Activated naive CD4-positive, alpha-beta T cell treated with anti-CD3 and anti-CD28 coated beads, Interleukin-2, amount 10 ng/mL, durations not matched to agents 7 days and 5 days (primary cell): ENCODE measurements at regions of chr10 and their contacts with region 1.

Region 1: DNA sequence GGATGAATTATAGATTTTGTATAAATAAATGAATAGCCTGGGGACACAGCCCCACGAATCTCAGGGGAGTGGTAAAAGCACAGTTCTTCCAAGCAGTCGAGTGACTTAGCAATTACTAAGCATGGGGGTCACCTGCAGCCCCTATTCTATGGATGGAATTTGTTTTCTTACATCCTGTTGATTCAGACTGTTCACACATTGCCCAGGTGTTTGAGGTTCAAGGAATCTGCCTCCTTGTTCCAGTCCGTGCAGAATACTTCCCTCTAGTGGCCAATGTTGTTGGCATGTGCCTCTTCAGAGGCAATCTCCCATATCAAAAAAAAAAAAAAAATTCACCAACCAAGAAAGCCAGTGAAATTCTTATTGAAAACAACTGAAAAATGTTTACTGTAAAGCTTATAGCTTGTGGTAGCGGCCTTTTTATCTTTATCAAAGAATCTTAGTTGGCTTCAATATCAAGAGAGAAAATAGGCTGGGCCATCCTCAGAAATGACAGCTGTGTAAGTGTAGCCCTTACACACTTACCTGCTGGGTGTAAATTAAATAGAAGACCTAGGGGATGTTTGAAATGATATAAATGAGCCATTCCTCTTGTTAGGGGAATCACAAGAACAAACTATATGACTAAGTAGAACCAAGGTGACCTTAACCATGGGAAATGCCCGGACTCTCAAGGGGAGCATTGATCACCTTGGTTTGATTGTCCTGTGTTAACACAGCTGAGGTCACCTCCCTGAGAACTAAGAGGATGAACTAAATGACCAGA is 7.8 kb downstream of the LIPM start:
- DNase-seq: peak; percentile 43
- H3K4me3 Mint-ChIP-seq: no peak overlapping the region
- H3K27ac Mint-ChIP-seq: no peak overlapping the region
- H3K4me1 Mint-ChIP-seq: peaks cover 22% of the 10 kb centered on the region
- H3K27me3 Mint-ChIP-seq: peaks cover 9% of the 10 kb centered on the region

Region 2: GRCh38 chr10:88687853-88688467 is 122.4 kb before region 1 on chr10:
- CTCF ChIA-PET with region 1: interaction called, 11 read pairs
- DNase-seq: no peak
- H3K4me3 Mint-ChIP-seq: no peak overlapping the region
- H3K27ac Mint-ChIP-seq: no peak overlapping the region
- H3K4me1 Mint-ChIP-seq: no peaks in the 10 kb centered on the region
- H3K27me3 Mint-ChIP-seq: peaks cover 18% of the 10 kb centered on the region

Region 3: DNA sequence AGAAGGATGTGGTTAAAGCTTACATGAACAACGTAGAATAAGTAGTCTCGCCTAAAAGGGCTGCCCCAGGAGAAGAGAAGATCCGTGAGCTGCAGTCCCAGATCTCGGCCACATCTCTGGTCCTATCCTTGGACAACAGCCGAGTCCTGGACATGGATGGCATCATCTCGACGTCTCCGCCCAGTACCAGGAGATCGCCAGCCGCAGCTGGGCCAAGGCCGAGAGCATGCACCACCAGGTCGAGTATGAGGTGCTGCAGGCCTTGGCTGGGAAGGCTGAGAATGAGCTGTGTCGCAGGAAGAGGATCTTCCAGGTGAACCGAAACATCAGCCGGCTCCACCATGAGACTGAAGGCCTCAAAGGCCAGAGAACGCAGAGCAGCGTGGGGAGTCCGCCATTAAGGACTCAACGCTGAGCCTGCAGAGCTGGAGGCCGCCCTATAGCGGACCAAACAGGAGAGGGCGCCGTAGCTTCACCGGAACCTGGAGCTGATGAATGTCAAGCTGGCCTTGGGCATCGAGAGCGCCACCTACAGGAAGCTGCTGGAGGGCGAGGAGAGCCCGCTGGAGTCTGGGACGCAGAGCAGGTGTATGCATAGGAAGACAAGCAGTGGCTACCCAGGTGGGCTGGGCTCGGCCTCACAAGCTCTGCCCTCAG is 82.1 kb before region 1 on chr10:
- CTCF ChIA-PET with region 1: interaction called, 30 read pairs
- DNase-seq: peak; percentile 62
- H3K4me3 Mint-ChIP-seq: no peak overlapping the region
- H3K27ac Mint-ChIP-seq: no peak overlapping the region
- H3K4me1 Mint-ChIP-seq: peaks cover 3% of the 10 kb centered on the region
- H3K27me3 Mint-ChIP-seq: peaks cover 11% of the 10 kb centered on the region

Region 4: DNA sequence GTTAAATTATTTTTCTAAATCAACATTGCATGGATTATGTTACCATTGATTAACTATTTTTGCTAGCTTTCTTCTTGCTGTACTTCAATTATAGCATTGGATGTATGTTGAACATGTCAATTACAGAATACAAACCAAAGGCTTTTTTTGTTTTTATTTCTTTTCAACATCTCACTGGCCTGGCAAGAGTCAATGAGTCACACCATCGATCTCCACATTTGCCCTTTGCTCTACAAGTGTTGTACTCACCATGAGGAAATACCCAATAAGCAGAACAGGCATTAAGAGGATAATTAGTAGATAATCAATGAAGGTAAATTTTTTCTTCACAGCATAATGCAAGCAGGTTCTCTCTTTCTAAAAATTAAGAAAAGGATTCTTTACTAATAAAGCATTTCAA is 17.9 kb after region 1 on chr10:
- CTCF ChIA-PET with region 1: interaction called, 11 read pairs
- DNase-seq: no peak
- H3K4me3 Mint-ChIP-seq: no peak overlapping the region
- H3K27ac Mint-ChIP-seq: no peak overlapping the region
- H3K4me1 Mint-ChIP-seq: peaks cover 83% of the 10 kb centered on the region
- H3K27me3 Mint-ChIP-seq: no peaks in the 10 kb centered on the region